Heart left ventricle (tissue), 16 donors: ENCODE measurements at regions of chr2 and their contacts with region 1.

Region 1: GRCh38 chr2:160429248-160430000 is 64.2 kb downstream of the RBMS1 start:
- DNase-seq: no peak
- ATAC-seq: peak in 1 of 4 donors; percentile 40
- H3K4me3 ChIP-seq: no peak overlapping the region
- H3K27ac ChIP-seq: peak overlapping the region in 10 of 12 donors; percentile 38 to 82 (median 75)
- H3K4me1 ChIP-seq: peaks cover 0 to 70% (median 53%) of the 10 kb centered on the region in 12 donors
- H3K27me3 ChIP-seq: no peaks in the 10 kb centered on the region
- CTCF ChIP-seq: peak; percentile 42 to 70 (median 60)
- POLR2A ChIP-seq: no peak

Region 2: GRCh38 chr2:160299540-160299939 is 129.9 kb before region 1 on chr2:
- intact Hi-C with region 1: no loop called
- DNase-seq: no peak
- ATAC-seq: peak in 3 of 4 donors; percentile 24 to 46 (median 33)
- H3K4me3 ChIP-seq: no peak overlapping the region
- H3K27ac ChIP-seq: peak overlapping the region in 5 of 12 donors; percentile 1 to 65 (median 22)
- H3K4me1 ChIP-seq: peaks cover 4 to 75% (median 52%) of the 10 kb centered on the region in 12 donors
- H3K27me3 ChIP-seq: no peaks in the 10 kb centered on the region
- CTCF ChIP-seq: no peak
- POLR2A ChIP-seq: no peak

Region 3: GRCh38 chr2:160375802-160376469 is 53.5 kb before region 1 on chr2:
- intact Hi-C with region 1: loop called in 1 of 10 experiments (anchors 10 kb)
- DNase-seq: no peak
- ATAC-seq: peak; percentile 48 to 64 (median 58)
- H3K4me3 ChIP-seq: peak overlapping the region in 4 of 12 donors; percentile 4 to 26 (median 12)
- H3K27ac ChIP-seq: peak overlapping the region; percentile 35 to 92 (median 68)
- H3K4me1 ChIP-seq: peaks cover 32 to 100% (median 98%) of the 10 kb centered on the region in 12 donors
- H3K27me3 ChIP-seq: no peaks in the 10 kb centered on the region
- CTCF ChIP-seq: no peak
- POLR2A ChIP-seq: no peak

Region 4: GRCh38 chr2:160970052-160970965 is 540.9 kb after region 1 on chr2:
- intact Hi-C with region 1: loop called in 4 of 10 experiments (anchors 5 to 10 kb)
- DNase-seq: peak in 2 of 5 donors; percentile 29 to 30
- ATAC-seq: peak in 3 of 4 donors; percentile 58 to 75 (median 69)
- H3K4me3 ChIP-seq: peak overlapping the region in 9 of 12 donors; percentile 17 to 38 (median 29)
- H3K27ac ChIP-seq: peak overlapping the region in 11 of 12 donors; percentile 22 to 76 (median 63)
- H3K4me1 ChIP-seq: peaks cover 0 to 23% (median 10%) of the 10 kb centered on the region in 12 donors
- H3K27me3 ChIP-seq: no peaks in the 10 kb centered on the region
- CTCF ChIP-seq: peak; percentile 63 to 87 (median 80)
- POLR2A ChIP-seq: no peak

Region 5: GRCh38 chr2:160994141-160995002 is 564.9 kb after region 1 on chr2:
- intact Hi-C with region 1: loop called in 1 of 10 experiments (anchors 5 kb)
- DNase-seq: peak in 4 of 5 donors; percentile 60 to 75 (median 66)
- ATAC-seq: peak; percentile 82 to 90 (median 88)
- H3K4me3 ChIP-seq: peak overlapping the region in 3 of 12 donors; percentile 1 to 22 (median 19)
- H3K27ac ChIP-seq: peak overlapping the region in 9 of 12 donors; percentile 20 to 75 (median 57)
- H3K4me1 ChIP-seq: peaks cover 0 to 16% (median 6%) of the 10 kb centered on the region in 12 donors
- H3K27me3 ChIP-seq: no peaks in the 10 kb centered on the region
- CTCF ChIP-seq: peak; percentile 78 to 93 (median 83)
- POLR2A ChIP-seq: no peak